ENCODE measurements at regions of chr11 and their contacts with region 1.

Region 1: DNA sequence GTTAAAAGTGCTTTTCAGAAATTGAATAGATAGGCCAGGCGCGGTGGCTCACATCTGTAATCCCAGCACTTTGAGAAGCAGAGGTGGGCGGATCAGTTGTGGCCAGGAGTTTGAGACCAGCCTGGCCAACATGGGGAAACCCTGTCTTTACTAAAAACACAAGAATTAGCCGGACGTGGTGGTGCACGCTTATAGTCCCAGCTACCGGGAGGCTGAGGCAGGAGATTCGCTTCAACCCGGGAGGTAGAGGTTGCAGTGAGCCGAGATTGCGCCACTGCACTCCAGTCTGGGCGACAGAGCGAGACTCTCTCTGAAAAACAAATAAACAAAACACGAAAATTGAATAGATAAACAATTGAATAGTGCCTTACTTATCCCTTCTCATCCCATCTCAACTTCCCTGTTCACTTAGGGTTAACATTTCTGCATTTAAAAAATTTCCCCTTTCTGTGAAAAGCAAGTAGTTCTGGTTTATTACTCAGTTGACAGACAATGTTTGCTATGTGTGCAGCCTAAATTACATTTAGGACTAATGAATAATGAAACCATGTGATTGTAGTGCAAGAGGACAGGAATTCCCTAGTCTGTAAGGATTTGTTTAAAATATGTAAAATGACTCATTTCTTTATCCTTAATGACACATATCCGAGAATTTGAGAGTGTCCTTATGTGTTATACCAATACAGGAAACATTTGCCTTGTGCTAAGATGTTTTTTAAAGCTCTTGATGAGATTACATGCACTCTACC is 6.0 kb downstream of the RNF169 start:
- DNase-seq: peak; percentile 92
- H3K4me3 ChIP-seq: peak overlapping the region in 2 of 3 experiments; percentile 14 to 64
- H3K27ac ChIP-seq: peak overlapping the region; percentile 86
- H3K4me1 ChIP-seq: peaks cover 46% of the 10 kb centered on the region
- H3K27me3 ChIP-seq: no peaks in the 10 kb centered on the region
- CTCF ChIP-seq: no peak
- POLR2A ChIP-seq: peak; percentile 53

Region 2: GRCh38 chr11:74710281-74710938 is 44.3 kb before region 1 on chr11:
- CTCF ChIA-PET with region 1: no interaction called
- POLR2A ChIA-PET with region 1: no interaction called
- dilution Hi-C with region 1: no loop called
- intact Hi-C with region 1: no loop called
- DNase-seq: peak; percentile 26
- H3K4me3 ChIP-seq: no peak overlapping the region
- H3K27ac ChIP-seq: no peak overlapping the region
- H3K4me1 ChIP-seq: no peaks in the 10 kb centered on the region
- H3K27me3 ChIP-seq: peaks cover 0 to 2% of the 10 kb centered on the region in 2 experiments
- CTCF ChIP-seq: no peak
- POLR2A ChIP-seq: no peak

Region 3: GRCh38 chr11:74773481-74773880 is 18.8 kb after region 1 on chr11:
- CTCF ChIA-PET with region 1: interaction called, 6 read pairs
- POLR2A ChIA-PET with region 1: interaction called, 3 read pairs
- dilution Hi-C with region 1: no loop called
- intact Hi-C with region 1: loop called (anchors 1 kb)
- DNase-seq: no peak
- H3K4me3 ChIP-seq: no peak overlapping the region
- H3K27ac ChIP-seq: no peak overlapping the region
- H3K4me1 ChIP-seq: peaks cover 20% of the 10 kb centered on the region
- H3K27me3 ChIP-seq: no peaks in the 10 kb centered on the region
- CTCF ChIP-seq: no peak
- POLR2A ChIP-seq: no peak

Region 4: GRCh38 chr11:74783241-74783871 is 28.7 kb after region 1 on chr11:
- CTCF ChIA-PET with region 1: interaction called, 3 read pairs
- POLR2A ChIA-PET with region 1: interaction called, 4 read pairs
- dilution Hi-C with region 1: no loop called
- intact Hi-C with region 1: loop called (anchors 1 kb)
- DNase-seq: peak; percentile 79
- H3K4me3 ChIP-seq: peak overlapping the region in 1 of 3 experiments; percentile 37
- H3K27ac ChIP-seq: peak overlapping the region; percentile 77
- H3K4me1 ChIP-seq: peaks cover 27% of the 10 kb centered on the region
- H3K27me3 ChIP-seq: no peaks in the 10 kb centered on the region
- CTCF ChIP-seq: no peak
- POLR2A ChIP-seq: no peak

Region 5: GRCh38 chr11:74839971-74840370 is 85.3 kb after region 1 on chr11:
- CTCF ChIA-PET with region 1: interaction called, 3 read pairs
- POLR2A ChIA-PET with region 1: interaction called, 3 read pairs
- dilution Hi-C with region 1: no loop called
- intact Hi-C with region 1: loop called (anchors 1 kb)
- DNase-seq: peak; percentile 58
- H3K4me3 ChIP-seq: no peak overlapping the region
- H3K27ac ChIP-seq: peak overlapping the region; percentile 33
- H3K4me1 ChIP-seq: peaks cover 23% of the 10 kb centered on the region
- H3K27me3 ChIP-seq: no peaks in the 10 kb centered on the region
- CTCF ChIP-seq: no peak
- POLR2A ChIP-seq: no peak

Measured in endothelial cell of umbilical vein (primary cell).